PC-3 (cell line): ENCODE measurements at regions of chr16 and their contacts with region 1.

Region 1: GRCh38 chr16:27549859-27550581 is at the starts of genes GTF3C1 and KATNIP:
- DNase-seq: peak; percentile 96
- ATAC-seq: peak; percentile 95
- H3K4me3 ChIP-seq: peak within 1 kb of the TSS; percentile 97
- H3K27ac ChIP-seq: peak within 1 kb of the TSS; percentile 12; the same call in 1 of the 2 replicates
- H3K4me1 ChIP-seq: peaks cover 28% of the 10 kb centered on the region
- H3K27me3 ChIP-seq: no peaks in the 10 kb centered on the region
- CTCF ChIP-seq: no peak
- total RNA-seq, gene GTF3C1: 97.5 and 138 TPM in 2 replicates
- total RNA-seq, gene KATNIP: 19.0 and 30.0 TPM in 2 replicates

Region 2: DNA sequence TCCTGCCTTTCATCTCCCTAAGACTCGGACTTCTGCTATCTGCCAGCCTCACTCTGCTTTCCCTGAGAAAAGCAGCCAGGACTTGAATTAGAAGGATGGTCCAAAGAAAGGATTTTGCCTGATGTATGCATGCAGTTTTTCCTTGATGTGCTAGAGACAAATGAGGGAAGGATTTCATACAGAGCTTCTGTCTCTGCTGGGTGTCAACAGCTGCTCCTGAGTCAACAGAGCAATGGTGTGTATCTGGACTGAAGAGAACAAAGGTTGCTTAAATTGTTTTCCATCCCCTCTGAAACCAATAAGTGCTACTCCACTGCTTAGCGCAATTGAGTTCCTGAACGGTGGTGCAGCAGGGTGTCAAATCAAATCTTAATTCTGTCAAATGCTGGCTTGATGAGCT is 1163.9 kb before region 1 on chr16:
- CTCF ChIA-PET with region 1: no interaction called
- POLR2A ChIA-PET with region 1: no interaction called
- intact Hi-C with region 1: no loop called
- DNase-seq: no peak
- ATAC-seq: no peak
- H3K4me3 ChIP-seq: no peak overlapping the region
- H3K27ac ChIP-seq: no peak overlapping the region
- H3K4me1 ChIP-seq: no peaks in the 10 kb centered on the region
- H3K27me3 ChIP-seq: no peaks in the 10 kb centered on the region
- CTCF ChIP-seq: no peak

Region 3: DNA sequence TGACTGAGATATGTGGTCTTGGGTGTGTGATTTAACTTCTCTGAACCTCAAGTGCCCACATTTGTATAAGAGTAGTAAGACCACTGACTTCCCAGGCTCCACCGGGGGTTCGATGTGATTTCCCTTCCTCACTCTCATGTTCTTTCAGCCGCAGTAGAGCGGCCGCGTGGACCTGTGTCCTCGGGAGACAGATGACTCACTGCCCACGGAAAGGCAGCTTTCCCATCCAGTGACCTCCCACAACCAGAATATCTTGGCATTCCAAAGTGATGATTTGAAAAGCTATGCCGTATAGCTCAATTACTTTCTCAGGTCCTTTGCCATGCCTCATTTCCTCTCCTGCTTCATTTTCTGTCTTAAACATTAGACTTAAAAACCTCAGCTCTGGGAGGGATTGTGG is 74.5 kb before region 1 on chr16:
- CTCF ChIA-PET with region 1: no interaction called
- POLR2A ChIA-PET with region 1: no interaction called
- intact Hi-C with region 1: no loop called
- DNase-seq: peak; percentile 31
- ATAC-seq: no peak
- H3K4me3 ChIP-seq: no peak overlapping the region
- H3K27ac ChIP-seq: 0 out of 2 replicates have a peak overlapping the region, but pooled peaks have one; percentile 12
- H3K4me1 ChIP-seq: peaks cover 3% of the 10 kb centered on the region; the same call in 1 of the 2 replicates
- H3K27me3 ChIP-seq: no peaks in the 10 kb centered on the region
- CTCF ChIP-seq: no peak

Region 4: GRCh38 chr16:27566417-27566816 is 16.4 kb after region 1 on chr16:
- CTCF ChIA-PET with region 1: no interaction called
- POLR2A ChIA-PET with region 1: interaction called, 18 read pairs
- intact Hi-C with region 1: no loop called
- DNase-seq: no peak
- ATAC-seq: no peak
- H3K4me3 ChIP-seq: no peak overlapping the region
- H3K27ac ChIP-seq: no peak overlapping the region
- H3K4me1 ChIP-seq: peaks cover 23% of the 10 kb centered on the region
- H3K27me3 ChIP-seq: no peaks in the 10 kb centered on the region
- CTCF ChIP-seq: no peak

Region 5: GRCh38 chr16:27586711-27587110 is 36.7 kb after region 1 on chr16:
- CTCF ChIA-PET with region 1: no interaction called
- POLR2A ChIA-PET with region 1: interaction called, 10 read pairs
- intact Hi-C with region 1: no loop called
- DNase-seq: no peak
- ATAC-seq: no peak
- H3K4me3 ChIP-seq: no peak overlapping the region
- H3K27ac ChIP-seq: no peak overlapping the region
- H3K4me1 ChIP-seq: no peaks in the 10 kb centered on the region
- H3K27me3 ChIP-seq: no peaks in the 10 kb centered on the region
- CTCF ChIP-seq: no peak

Region 6: GRCh38 chr16:27650073-27650701 is 100.2 kb after region 1 on chr16:
- CTCF ChIA-PET with region 1: no interaction called
- POLR2A ChIA-PET with region 1: no interaction called
- intact Hi-C with region 1: no loop called
- DNase-seq: no peak
- ATAC-seq: no peak
- H3K4me3 ChIP-seq: no peak overlapping the region
- H3K27ac ChIP-seq: no peak overlapping the region
- H3K4me1 ChIP-seq: no peaks in the 10 kb centered on the region
- H3K27me3 ChIP-seq: no peaks in the 10 kb centered on the region
- CTCF ChIP-seq: no peak